ENCODE measurements at regions of chr17 and their contacts with region 1.

Region 1: GRCh38 chr17:7484067-7484918 is at the start of gene POLR2A:
- DNase-seq: peak; percentile 96 to 99 (median 98)
- ATAC-seq: peak; percentile 59 to 67
- H3K4me3 Mint-ChIP-seq: peak within 1 kb of the TSS; percentile 95 to 100 (median 99)
- H3K27ac Mint-ChIP-seq: peak within 1 kb of the TSS; percentile 97 to 100 (median 100)
- H3K4me1 Mint-ChIP-seq: peaks cover 46 to 80% (median 75%) of the 10 kb centered on the region in 4 donors
- H3K27me3 Mint-ChIP-seq: no peaks in the 10 kb centered on the region
- polyA plus RNA-seq, gene POLR2A: 31.1 to 68.0 (median 47.3) TPM

Region 2: GRCh38 chr17:7336240-7337175 is 147.8 kb before region 1 on chr17 and contains the start of gene ACAP1:
- POLR2A ChIA-PET with region 1: interaction called, 17 read pairs
- DNase-seq: peak; percentile 74 to 93 (median 82)
- ATAC-seq: peak; percentile 94
- H3K4me3 Mint-ChIP-seq: peak within 1 kb of the TSS; percentile 92 to 98 (median 95)
- H3K27ac Mint-ChIP-seq: peak within 1 kb of the TSS; percentile 77 to 99 (median 98)
- H3K4me1 Mint-ChIP-seq: peaks cover 26 to 69% (median 64%) of the 10 kb centered on the region in 4 donors
- H3K27me3 Mint-ChIP-seq: no peaks in the 10 kb centered on the region
- polyA plus RNA-seq, gene ACAP1: 246 to 295 (median 283) TPM

Region 3: GRCh38 chr17:7416323-7416722 is 68.0 kb before region 1 on chr17:
- POLR2A ChIA-PET with region 1: no interaction called
- DNase-seq: no peak
- ATAC-seq: no peak
- H3K4me3 Mint-ChIP-seq: no peak overlapping the region
- H3K27ac Mint-ChIP-seq: peak overlapping the region in 2 of 10 donors; percentile 77 to 92
- H3K4me1 Mint-ChIP-seq: peaks cover 0 to 5% (median 0%) of the 10 kb centered on the region in 4 donors
- H3K27me3 Mint-ChIP-seq: no peaks in the 10 kb centered on the region

Region 4: GRCh38 chr17:7435221-7435675 is 49.0 kb before region 1 on chr17 and contains the start of gene TMEM102:
- POLR2A ChIA-PET with region 1: interaction called, 132 read pairs
- DNase-seq: peak; percentile 94 to 99 (median 98)
- ATAC-seq: peak; percentile 74 to 82
- H3K4me3 Mint-ChIP-seq: peak within 1 kb of the TSS; percentile 90 to 98 (median 95)
- H3K27ac Mint-ChIP-seq: peak within 1 kb of the TSS; percentile 91 to 99 (median 98)
- H3K4me1 Mint-ChIP-seq: peaks cover 20 to 45% (median 37%) of the 10 kb centered on the region in 4 donors
- H3K27me3 Mint-ChIP-seq: peaks cover 3 to 18% (median 9%) of the 10 kb centered on the region in 5 donors
- polyA plus RNA-seq, gene TMEM102: 9.8 to 19.1 (median 12.1) TPM

Region 5: DNA sequence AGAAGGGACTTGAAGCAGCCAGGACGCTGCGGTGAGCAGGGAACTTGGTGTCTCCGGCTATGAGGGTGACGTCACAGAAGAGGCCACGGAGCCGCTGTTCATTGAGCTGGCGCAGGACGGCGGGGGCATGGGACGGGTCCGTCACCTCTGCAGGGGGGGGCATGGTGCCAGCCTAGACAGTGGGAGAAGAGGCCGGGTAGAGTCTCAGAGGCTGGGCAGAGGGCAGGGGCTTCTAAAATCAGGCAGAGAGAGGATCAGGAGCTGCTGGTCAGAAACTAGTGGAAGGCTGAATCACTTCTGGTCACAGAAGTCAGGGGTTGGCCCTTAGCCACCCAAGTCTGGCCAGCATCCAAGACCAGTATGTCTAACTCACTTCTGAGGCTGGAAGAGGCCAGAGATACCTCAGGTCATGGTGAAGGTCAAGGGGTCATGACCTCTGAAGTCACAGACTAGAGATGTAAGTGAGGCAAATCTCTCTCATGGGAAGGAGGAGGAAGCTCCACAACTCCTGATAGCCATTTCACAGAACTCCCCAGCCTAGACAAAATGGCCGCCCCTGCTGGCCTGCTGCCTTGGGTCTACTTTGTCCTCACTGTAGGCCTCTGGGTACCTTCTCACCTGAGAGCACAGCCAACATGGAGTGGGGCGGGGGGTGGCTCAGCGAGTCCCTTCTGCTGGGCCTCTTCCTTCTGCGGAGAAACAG is 17.5 kb before region 1 on chr17:
- POLR2A ChIA-PET with region 1: interaction called, 295 read pairs
- DNase-seq: no peak
- ATAC-seq: no peak
- H3K4me3 Mint-ChIP-seq: peak overlapping the region in 2 of 10 donors; percentile 11 to 19
- H3K27ac Mint-ChIP-seq: peak overlapping the region in 9 of 10 donors; percentile 5 to 87 (median 72)
- H3K4me1 Mint-ChIP-seq: peaks cover 13 to 44% (median 34%) of the 10 kb centered on the region in 4 donors
- H3K27me3 Mint-ChIP-seq: no peaks in the 10 kb centered on the region

Region 6: DNA sequence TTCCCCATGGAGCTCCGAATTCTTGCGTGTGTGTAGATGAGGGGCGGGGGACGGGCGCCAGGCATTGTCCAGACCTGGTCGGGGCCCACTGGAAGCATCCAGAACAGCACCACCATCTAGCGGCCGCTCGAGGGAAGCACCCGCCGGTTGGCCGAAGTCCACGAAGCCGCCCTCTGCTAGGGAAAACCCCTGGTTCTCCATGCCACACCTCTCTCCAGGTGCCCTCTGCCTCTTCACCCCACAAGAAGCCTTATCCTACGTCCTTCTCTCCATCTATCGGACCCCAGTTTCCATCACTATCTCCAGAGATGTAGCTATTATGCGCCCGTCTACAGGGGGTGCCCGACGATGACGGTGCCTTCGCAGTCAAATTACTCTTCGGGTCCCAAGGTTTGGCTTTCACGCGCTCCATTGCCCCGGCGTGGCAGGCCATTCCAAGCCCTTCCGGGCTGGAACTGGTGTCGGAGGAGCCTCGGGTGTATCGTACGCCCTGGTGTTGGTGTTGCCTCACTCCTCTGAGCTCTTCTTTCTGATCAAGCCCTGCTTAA is 76.8 kb after region 1 on chr17:
- POLR2A ChIA-PET with region 1: interaction called, 14 read pairs
- DNase-seq: peak; percentile 60 to 89 (median 78)
- ATAC-seq: peak; percentile 62 to 69
- H3K4me3 Mint-ChIP-seq: peak overlapping the region; percentile 88 to 98 (median 94)
- H3K27ac Mint-ChIP-seq: peak overlapping the region; percentile 83 to 99 (median 97)
- H3K4me1 Mint-ChIP-seq: peaks cover 31 to 59% (median 55%) of the 10 kb centered on the region in 4 donors
- H3K27me3 Mint-ChIP-seq: no peaks in the 10 kb centered on the region

Region 7: DNA sequence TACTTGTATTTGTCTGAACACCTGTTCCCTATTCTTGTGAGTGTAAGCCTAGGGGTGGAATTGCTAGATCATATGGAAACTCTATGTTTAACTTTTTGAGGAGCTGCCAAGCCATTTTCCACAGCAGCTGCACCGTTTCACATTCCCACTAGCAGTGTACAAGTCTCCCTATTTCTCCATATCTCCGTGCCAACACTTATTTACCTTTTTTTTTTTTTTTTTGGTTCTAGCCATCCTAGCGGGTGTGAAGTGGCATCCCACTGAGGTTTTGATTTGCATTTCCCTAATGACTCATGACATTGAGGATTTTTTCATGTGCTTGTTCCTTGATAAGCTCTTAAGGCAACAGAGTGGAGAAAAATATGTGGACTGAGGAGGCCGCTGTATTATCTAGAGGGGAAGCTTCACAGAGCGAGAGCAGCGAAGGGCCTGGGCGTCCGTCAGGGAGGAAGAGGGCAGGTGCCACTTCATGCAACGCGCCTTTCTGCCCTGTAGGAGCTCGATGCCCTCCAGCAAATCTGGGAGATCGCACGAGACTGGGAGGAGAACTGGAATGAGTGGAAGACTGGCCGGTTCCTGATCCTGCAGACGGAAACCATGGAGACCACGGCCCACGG is 283.2 kb after region 1 on chr17:
- POLR2A ChIA-PET with region 1: no interaction called
- DNase-seq: no peak
- ATAC-seq: no peak
- H3K4me3 Mint-ChIP-seq: no peak overlapping the region
- H3K27ac Mint-ChIP-seq: no peak overlapping the region
- H3K4me1 Mint-ChIP-seq: no peaks in the 10 kb centered on the region
- H3K27me3 Mint-ChIP-seq: peaks cover 3 to 22% (median 8%) of the 10 kb centered on the region in 5 donors

Measured in naive thymus-derived CD8-positive, alpha-beta T cell (primary cell).